Heart right ventricle (tissue), 16 donors: ENCODE measurements at regions of chr9 and their contacts with region 1.

Region 1: DNA sequence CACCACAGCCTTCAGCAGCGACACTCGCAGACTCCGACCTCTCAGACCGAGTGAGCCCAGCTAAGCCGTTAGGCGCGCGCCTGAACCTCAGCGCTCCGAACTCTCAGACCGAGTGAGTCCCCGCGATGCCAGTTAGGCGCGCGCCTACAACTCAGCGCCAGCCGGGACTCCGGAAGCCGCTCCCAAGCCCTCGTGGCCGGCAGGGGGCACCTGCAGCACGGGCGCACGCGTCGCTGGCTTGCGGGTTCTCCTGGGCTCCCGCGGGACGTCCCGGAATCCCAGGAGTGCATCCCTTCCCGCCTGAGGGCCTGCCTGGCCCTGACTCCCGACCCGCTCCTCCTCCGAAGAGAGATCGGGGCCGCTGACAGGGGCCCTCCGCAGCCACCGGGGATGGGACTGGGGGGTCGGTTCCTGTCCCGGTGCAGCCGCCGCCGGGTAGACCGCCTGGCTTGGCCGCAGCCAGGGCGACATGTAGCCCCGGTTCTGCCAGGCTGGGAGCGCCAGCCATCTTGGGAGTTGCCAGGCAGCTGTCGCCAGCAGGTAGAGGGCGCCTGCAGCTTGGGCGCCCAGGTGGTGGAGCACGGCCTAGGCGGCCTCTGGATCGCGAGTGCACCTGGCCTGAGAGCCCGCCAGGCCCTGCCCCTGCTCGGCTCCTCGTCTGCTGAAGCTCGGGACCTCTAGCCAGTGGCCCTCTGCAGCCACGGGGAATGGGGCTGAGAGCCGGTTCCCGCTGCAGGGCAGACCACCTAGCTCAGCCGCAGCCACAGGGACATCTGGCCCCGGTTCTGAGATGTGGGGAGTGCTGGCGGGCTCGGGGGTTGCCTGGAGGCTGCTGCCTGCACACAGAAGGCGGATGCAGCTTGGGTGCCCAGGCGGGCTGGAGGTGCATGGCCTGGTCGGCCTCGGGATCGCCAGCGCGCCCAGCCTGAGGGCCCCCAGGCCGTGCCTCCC is at the start of gene ANKRD18A:
- DNase-seq: peak; percentile 42 to 69
- ATAC-seq: peak; percentile 75 to 92 (median 87)
- H3K4me3 ChIP-seq: peak within 1 kb of the TSS; percentile 25 to 62 (median 52)
- H3K27ac ChIP-seq: peak within 1 kb of the TSS in 5 of 10 donors; percentile 4 to 45 (median 41)
- H3K4me1 ChIP-seq: peaks cover 0 to 32% (median 22%) of the 10 kb centered on the region in 9 donors
- H3K27me3 ChIP-seq: peaks cover 8 to 88% (median 79%) of the 10 kb centered on the region in 7 donors
- CTCF ChIP-seq: peak; percentile 3 to 58 (median 48)
- total RNA-seq, gene ANKRD18A: 0.22 to 5.5 (median 3.1) TPM

Region 2: GRCh38 chr9:38671748-38672147 is 51.0 kb after region 1 on chr9:
- intact Hi-C with region 1: no loop called
- DNase-seq: no peak
- ATAC-seq: no peak
- H3K4me3 ChIP-seq: no peak overlapping the region
- H3K27ac ChIP-seq: peak overlapping the region in 3 of 10 donors; percentile 19 to 52 (median 38)
- H3K4me1 ChIP-seq: peaks cover 0 to 11% (median 6%) of the 10 kb centered on the region in 9 donors
- H3K27me3 ChIP-seq: no peaks in the 10 kb centered on the region
- CTCF ChIP-seq: no peak

Region 3: GRCh38 chr9:38687387-38687842 is 66.7 kb after region 1 on chr9:
- intact Hi-C with region 1: loop called in 1 of 10 experiments (anchors 10 kb)
- DNase-seq: peak in 1 of 2 donors; percentile 68
- ATAC-seq: peak; percentile 56 to 89 (median 78)
- H3K4me3 ChIP-seq: peak overlapping the region in 8 of 10 donors; percentile 6 to 33 (median 26)
- H3K27ac ChIP-seq: peak overlapping the region in 2 of 10 donors; percentile 10 to 19
- H3K4me1 ChIP-seq: peaks cover 0 to 22% (median 8%) of the 10 kb centered on the region in 9 donors
- H3K27me3 ChIP-seq: no peaks in the 10 kb centered on the region
- CTCF ChIP-seq: no peak